OCI-LY7 (cell line): ENCODE measurements at regions of chr10 and their contacts with region 1.

Region 1: DNA sequence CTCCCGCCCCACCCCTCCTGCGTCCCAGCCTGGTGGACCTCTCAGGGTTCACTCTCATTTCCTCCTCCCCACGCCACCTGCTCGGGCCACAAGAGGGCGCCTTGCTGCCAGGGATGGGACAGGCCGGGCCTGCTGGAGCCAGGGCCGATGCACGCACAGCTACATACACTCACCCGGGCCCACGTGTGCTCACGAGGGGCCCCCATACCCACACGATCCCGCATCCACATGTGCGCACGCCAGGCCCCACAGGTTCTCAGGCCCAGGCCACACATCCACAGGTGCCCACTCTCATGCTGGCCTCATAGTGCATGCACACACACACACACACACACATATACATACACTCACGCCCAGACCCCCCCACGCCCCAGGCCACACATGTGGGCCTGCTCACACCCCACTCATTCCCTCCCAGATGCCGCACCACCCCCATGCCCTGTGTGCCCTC is 68.6 kb downstream of the LHPP start:
- DNase-seq: peak; percentile 88
- H3K4me3 ChIP-seq: no peak overlapping the region
- H3K27ac ChIP-seq: no peak overlapping the region
- H3K4me1 ChIP-seq: peaks cover 50% of the 10 kb centered on the region
- CTCF ChIP-seq: peak; percentile 86

Region 2: GRCh38 chr10:124366825-124367224 is 163.4 kb before region 1 on chr10:
- CTCF ChIA-PET with region 1: no interaction called
- POLR2A ChIA-PET with region 1: no interaction called
- intact Hi-C with region 1: no loop called
- DNase-seq: no peak
- H3K4me3 ChIP-seq: no peak overlapping the region
- H3K27ac ChIP-seq: no peak overlapping the region
- H3K4me1 ChIP-seq: no peaks in the 10 kb centered on the region
- CTCF ChIP-seq: no peak

Region 3: DNA sequence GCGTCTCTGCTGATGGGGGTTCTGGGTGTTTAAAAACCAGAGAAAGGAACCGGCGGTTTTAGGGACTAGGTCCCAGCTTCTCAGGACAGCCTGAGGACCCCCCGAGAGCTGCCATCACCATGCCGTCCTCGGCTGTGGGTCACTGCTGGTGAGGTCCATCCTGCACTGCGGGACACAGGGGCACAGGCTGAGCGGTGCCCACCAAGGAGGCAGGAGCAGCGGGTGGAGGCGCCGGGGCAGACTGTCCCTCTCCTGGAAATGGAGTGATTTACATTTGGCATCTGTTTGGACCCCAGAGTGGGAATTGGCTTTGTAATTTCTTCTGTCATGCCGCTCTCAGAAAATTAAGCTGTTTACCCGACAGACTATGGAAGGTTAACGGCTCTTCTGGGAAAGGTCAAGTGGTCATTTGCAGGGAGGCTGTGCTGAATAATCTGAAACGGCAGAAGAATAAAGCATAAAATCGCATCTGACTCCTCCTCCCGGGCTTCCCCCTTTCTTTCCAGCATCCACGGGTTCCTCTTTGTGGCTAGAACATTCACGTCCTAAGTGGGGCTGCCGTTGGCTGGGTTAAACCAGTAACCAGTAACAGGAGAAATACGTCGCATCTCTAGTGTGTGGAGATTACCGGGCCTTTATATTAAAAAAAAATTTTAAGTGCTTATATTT is 36.9 kb before region 1 on chr10:
- CTCF ChIA-PET with region 1: no interaction called
- POLR2A ChIA-PET with region 1: no interaction called
- intact Hi-C with region 1: no loop called
- DNase-seq: no peak
- H3K4me3 ChIP-seq: no peak overlapping the region
- H3K27ac ChIP-seq: no peak overlapping the region
- H3K4me1 ChIP-seq: peaks cover 9% of the 10 kb centered on the region
- CTCF ChIP-seq: no peak

Region 4: GRCh38 chr10:124545351-124546054 is 15.3 kb after region 1 on chr10:
- CTCF ChIA-PET with region 1: interaction called, 43 read pairs
- POLR2A ChIA-PET with region 1: interaction called, 105 read pairs
- intact Hi-C with region 1: no loop called
- DNase-seq: peak; percentile 74
- H3K4me3 ChIP-seq: peak overlapping the region; percentile 62
- H3K27ac ChIP-seq: peak overlapping the region; percentile 98
- H3K4me1 ChIP-seq: peaks cover 100% of the 10 kb centered on the region
- CTCF ChIP-seq: no peak

Region 5: DNA sequence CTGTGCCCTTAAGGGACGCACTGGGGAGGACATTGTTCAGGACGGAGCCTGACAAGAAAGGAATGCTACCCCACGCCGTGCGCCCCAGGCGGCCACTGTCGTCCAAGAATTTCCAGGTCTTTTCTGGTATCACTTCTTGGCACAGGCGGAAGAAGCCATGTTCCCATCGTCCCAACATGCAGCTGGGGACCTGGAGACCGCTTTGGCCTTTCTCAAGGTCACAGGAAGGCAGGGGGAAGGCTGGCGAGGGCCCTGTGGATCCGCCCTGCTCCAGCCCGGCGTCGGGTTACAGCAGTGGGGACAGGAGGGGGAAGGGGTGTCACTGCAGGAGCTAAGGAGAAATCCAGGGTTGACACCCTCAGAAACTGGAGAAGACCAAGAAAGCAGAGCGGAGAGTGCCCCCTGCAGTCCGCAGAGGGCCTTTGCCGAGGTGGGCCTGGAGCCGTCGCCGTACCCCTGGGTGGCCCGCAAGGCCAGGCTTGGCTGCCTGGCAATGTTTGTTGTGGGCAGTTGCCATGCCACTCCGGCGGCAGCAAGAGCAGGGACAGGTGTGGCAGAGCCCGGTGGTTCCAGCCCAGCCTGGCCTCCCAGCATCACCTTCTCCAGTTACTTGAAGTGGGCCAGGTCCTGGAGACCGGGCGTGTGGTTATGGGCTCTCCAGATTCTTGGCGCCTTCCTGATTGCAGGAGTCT is 35.5 kb after region 1 on chr10:
- CTCF ChIA-PET with region 1: interaction called, 9 read pairs
- POLR2A ChIA-PET with region 1: interaction called, 6 read pairs
- intact Hi-C with region 1: loop called (anchors 1 kb)
- DNase-seq: peak; percentile 65
- H3K4me3 ChIP-seq: no peak overlapping the region
- H3K27ac ChIP-seq: no peak overlapping the region
- H3K4me1 ChIP-seq: peaks cover 44% of the 10 kb centered on the region
- CTCF ChIP-seq: peak; percentile 81

Region 6: GRCh38 chr10:124601431-124602120 is 71.3 kb after region 1 on chr10:
- CTCF ChIA-PET with region 1: interaction called, 5 read pairs
- POLR2A ChIA-PET with region 1: interaction called, 14 read pairs
- intact Hi-C with region 1: loop called (anchors 1 kb)
- DNase-seq: peak; percentile 92
- H3K4me3 ChIP-seq: peak overlapping the region; percentile 15
- H3K27ac ChIP-seq: peak overlapping the region; percentile 79
- H3K4me1 ChIP-seq: peaks cover 89% of the 10 kb centered on the region
- CTCF ChIP-seq: no peak

Region 7: DNA sequence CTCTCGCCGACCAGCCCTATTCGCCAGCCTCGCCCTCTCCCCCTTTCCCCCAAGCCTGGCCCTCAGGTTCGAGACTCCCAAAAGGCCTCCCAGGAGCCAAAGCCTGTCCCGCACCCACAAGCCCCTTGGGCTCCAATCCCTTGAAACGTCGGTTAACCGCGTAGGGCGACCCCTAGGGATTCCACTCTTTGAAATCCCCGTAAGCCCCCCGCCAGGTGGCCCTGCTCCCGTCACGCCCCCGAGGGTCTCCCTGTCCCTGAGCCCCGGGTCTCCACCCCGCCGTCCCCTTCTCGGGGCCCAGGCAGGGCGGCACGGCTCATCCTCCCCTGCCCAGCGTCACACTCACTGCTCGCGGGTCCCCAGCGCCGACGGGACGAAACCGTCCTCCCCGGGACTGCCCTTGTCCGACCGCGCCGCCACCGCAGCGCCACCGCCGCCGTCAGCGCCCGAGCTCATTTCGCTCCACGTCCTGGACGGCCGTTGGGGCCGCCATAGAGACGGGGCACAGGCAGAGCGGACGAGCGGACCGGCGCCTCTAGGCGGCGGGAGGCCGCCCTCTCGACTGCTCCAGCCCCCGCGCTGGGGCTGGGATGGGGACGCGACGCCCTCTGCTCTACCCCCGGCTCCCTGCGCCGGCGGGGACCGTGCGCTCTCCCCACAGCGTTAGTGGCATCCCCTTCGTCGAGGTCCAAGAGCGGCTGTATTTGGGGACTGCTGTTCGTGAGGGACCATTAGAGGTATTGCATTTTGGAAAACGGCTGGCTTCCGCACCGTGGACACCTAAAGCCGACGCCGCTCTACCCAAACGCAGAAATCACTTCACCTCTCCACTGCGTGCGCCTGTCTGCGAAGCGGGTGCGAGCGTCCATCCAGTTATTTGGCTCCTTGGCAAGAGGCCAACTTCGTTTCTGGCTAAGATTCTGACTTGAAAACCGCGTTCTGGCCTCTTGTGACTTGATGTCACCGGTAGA is 261.4 kb after region 1 on chr10 and contains the start of gene EEF1AKMT2:
- CTCF ChIA-PET with region 1: no interaction called
- POLR2A ChIA-PET with region 1: no interaction called
- intact Hi-C with region 1: loop called (anchors 5 kb)
- DNase-seq: peak; percentile 92
- H3K4me3 ChIP-seq: peak within 1 kb of the TSS; percentile 80
- H3K27ac ChIP-seq: peak within 1 kb of the TSS; percentile 81
- H3K4me1 ChIP-seq: peaks cover 13% of the 10 kb centered on the region
- CTCF ChIP-seq: peak; percentile 69
- total RNA-seq, gene EEF1AKMT2: 27.5 and 37.7 TPM in 2 replicates

Region 8: GRCh38 chr10:124827474-124827873 is 297.2 kb after region 1 on chr10:
- CTCF ChIA-PET with region 1: no interaction called
- POLR2A ChIA-PET with region 1: no interaction called
- intact Hi-C with region 1: loop called (anchors 1 kb)
- DNase-seq: peak; percentile 51
- H3K4me3 ChIP-seq: no peak overlapping the region
- H3K27ac ChIP-seq: no peak overlapping the region
- H3K4me1 ChIP-seq: no peaks in the 10 kb centered on the region
- CTCF ChIP-seq: peak; percentile 84

Region 9: DNA sequence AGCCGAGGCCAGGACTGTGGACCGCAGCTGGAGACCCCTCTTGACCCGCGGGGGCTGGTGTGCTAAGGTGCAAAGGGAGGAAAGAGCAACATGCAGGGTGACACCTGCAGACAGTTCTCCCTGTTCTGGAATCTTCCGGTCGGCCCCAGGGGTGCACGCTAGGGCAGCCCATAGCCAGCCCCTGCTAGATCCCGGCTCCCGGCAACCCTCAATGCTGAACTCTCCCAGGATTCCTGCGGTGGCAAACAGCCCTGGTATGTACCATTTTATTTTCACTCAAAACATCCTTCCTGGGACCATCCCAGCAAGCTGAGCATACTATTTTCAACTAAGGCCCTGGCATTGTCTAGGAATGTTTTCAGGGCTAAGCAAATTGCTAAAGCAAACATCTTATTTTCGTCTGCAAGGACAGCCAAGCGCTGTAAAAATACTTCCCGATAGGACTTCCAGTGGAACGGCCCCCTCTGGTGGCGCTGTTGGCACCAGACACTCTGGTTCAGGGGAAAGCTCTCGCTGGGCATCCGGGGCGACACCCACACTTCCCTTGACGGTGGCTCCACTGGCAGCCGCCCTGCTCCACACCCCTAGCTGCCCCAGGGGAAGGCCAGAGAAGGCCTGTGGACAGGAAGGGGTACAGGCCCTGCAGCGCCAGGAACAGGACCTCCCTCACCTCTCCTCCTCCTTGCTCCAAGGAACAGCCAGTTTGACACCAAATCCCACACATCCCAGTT is 530.8 kb after region 1 on chr10:
- CTCF ChIA-PET with region 1: no interaction called
- POLR2A ChIA-PET with region 1: no interaction called
- intact Hi-C with region 1: loop called (anchors 5 kb)
- DNase-seq: peak; percentile 73
- H3K4me3 ChIP-seq: peak overlapping the region; percentile 37
- H3K27ac ChIP-seq: peak overlapping the region; percentile 8
- H3K4me1 ChIP-seq: peaks cover 61% of the 10 kb centered on the region
- CTCF ChIP-seq: peak; percentile 89